ENCODE measurements at regions of chr10 and their contacts with region 1.

Region 1: GRCh38 chr10:68301790-68302502 is 29.9 kb upstream of the HNRNPH3 start:
- DNase-seq: peak in 1 of 35 experiments; percentile 47
- ATAC-seq: peak in 2 of 4 experiments; percentile 38 to 45
- H3K4me3 ChIP-seq: no peak overlapping the region
- H3K4me3 Mint-ChIP-seq: no peak overlapping the region
- H3K27ac ChIP-seq: no peak overlapping the region
- H3K27ac Mint-ChIP-seq: no peak overlapping the region
- H3K4me1 ChIP-seq: no peaks in the 10 kb centered on the region
- H3K4me1 Mint-ChIP-seq: peaks cover 0 to 3% (median 0%) of the 10 kb centered on the region in 3 donors
- H3K27me3 ChIP-seq: no peaks in the 10 kb centered on the region
- H3K27me3 Mint-ChIP-seq: no peaks in the 10 kb centered on the region

Region 2: DNA sequence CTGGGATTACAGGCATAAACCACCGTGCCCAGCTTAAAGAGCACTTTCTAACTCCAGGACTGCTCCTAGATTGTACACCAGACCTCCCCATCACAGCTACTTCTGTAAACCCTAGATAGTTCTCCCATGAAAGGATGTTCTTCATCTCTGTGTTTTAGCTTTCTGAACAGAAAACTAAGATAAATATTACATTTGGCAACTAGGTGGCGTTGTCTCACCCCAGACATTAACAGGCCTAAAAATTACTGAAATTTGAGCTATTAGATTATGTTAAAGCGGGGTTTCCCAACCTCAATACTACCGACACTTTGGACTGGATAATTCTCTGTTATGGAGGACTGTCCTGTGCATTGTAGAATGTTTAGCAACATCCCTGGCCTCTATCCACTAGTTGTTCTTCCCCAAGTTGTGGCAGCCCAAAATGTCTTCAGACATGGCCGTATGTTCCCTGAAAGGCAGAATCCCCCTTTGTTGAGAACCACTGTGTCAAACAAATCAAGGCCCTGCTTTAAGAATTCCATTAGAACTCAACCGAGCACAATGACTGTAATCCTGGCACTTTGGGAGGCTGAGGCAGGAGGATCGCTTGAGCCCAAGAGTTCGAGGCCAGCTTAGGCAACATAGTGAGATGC is 89.1 kb before region 1 on chr10:
- CTCF ChIA-PET with region 1: interaction called in 1 of 2 experiments, 13 read pairs
- POLR2A ChIA-PET with region 1: no interaction called
- DNase-seq: peak in 1 of 35 experiments; percentile 51
- ATAC-seq: no peak
- H3K4me3 ChIP-seq: no peak overlapping the region
- H3K4me3 Mint-ChIP-seq: no peak overlapping the region
- H3K27ac ChIP-seq: no peak overlapping the region
- H3K27ac Mint-ChIP-seq: no peak overlapping the region
- H3K4me1 ChIP-seq: no peaks in the 10 kb centered on the region
- H3K4me1 Mint-ChIP-seq: no peaks in the 10 kb centered on the region
- H3K27me3 ChIP-seq: peaks cover 4 to 7% of the 10 kb centered on the region in 2 experiments
- H3K27me3 Mint-ChIP-seq: peaks cover 0 to 4% of the 10 kb centered on the region in 2 donors

Region 3: GRCh38 chr10:68924593-68924992 is 622.6 kb after region 1 on chr10:
- CTCF ChIA-PET with region 1: no interaction called
- POLR2A ChIA-PET with region 1: interaction called in 1 of 2 experiments, 12 read pairs
- DNase-seq: no peak
- ATAC-seq: no peak
- H3K4me3 ChIP-seq: no peak overlapping the region
- H3K4me3 Mint-ChIP-seq: no peak overlapping the region
- H3K27ac ChIP-seq: no peak overlapping the region
- H3K27ac Mint-ChIP-seq: peak overlapping the region in 1 of 2 donors; percentile 61
- H3K4me1 ChIP-seq: no peaks in the 10 kb centered on the region
- H3K4me1 Mint-ChIP-seq: peaks cover 5 to 15% (median 11%) of the 10 kb centered on the region in 3 donors
- H3K27me3 ChIP-seq: no peaks in the 10 kb centered on the region
- H3K27me3 Mint-ChIP-seq: no peaks in the 10 kb centered on the region

Measured in T-cell (primary cell).